ENCODE measurements at regions of chr6 and their contacts with region 1.

Region 1: GRCh38 chr6:34392497-34393190 is at the start of gene NUDT3:
- DNase-seq: peak; percentile 96
- ATAC-seq: peak; percentile 92
- H3K4me3 Mint-ChIP-seq: no peak within 1 kb of the TSS
- H3K27ac Mint-ChIP-seq: peak within 1 kb of the TSS; percentile 95
- H3K4me1 Mint-ChIP-seq: peaks cover 21% of the 10 kb centered on the region
- H3K27me3 Mint-ChIP-seq: no peaks in the 10 kb centered on the region
- total RNA-seq, gene NUDT3: 13.3 to 13.6 TPM

Region 2: DNA sequence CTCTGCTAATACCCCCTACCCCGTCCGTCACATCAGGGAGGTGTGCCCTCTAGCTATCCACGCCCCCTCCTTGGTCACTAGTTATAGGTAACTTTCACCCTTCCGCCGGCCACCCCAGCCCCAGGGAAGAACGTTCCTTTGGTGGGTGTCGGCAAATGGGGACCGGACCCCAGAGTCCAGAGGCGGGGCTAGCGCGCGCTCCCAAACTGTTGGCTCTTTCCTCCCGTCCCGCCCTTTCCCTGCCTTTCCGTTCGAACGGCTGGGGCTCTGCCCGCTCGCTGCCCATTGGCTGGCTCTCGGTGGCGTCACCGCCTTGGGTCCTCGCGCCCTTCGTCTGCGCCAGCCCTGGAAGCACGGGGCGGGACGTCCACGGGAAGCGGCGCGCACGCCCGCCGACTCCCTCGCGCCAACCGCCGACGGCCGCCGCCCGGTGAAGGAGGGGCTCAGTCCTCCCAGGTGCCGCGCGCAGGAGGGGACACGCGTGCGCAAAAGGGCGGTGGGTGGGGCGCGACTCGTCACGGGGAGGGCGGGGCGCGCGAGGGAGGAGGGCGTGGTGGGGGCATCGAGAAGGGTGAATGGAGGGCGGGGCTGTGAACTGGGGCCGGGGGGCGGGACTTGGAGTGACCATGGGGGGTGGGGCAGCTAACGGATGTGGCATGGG is 982.5 kb before region 1 on chr6:
- CTCF ChIA-PET with region 1: no interaction called
- POLR2A ChIA-PET with region 1: no interaction called
- intact Hi-C with region 1: loop called in 1 of 2 experiments (anchors 2 kb)
- DNase-seq: peak; percentile 98
- ATAC-seq: peak; percentile 88
- H3K4me3 Mint-ChIP-seq: peak overlapping the region; percentile 80
- H3K27ac Mint-ChIP-seq: peak overlapping the region; percentile 96
- H3K4me1 Mint-ChIP-seq: peaks cover 31% of the 10 kb centered on the region
- H3K27me3 Mint-ChIP-seq: no peaks in the 10 kb centered on the region

Region 3: GRCh38 chr6:34182751-34183531 is 209.7 kb before region 1 on chr6:
- CTCF ChIA-PET with region 1: no interaction called
- POLR2A ChIA-PET with region 1: interaction called, 3 read pairs
- intact Hi-C with region 1: loop called in 1 of 2 experiments (anchors 1 kb)
- DNase-seq: peak; percentile 78
- ATAC-seq: peak; percentile 95
- H3K4me3 Mint-ChIP-seq: peak overlapping the region; percentile 65
- H3K27ac Mint-ChIP-seq: peak overlapping the region; percentile 95
- H3K4me1 Mint-ChIP-seq: peaks cover 20% of the 10 kb centered on the region
- H3K27me3 Mint-ChIP-seq: no peaks in the 10 kb centered on the region

Region 4: DNA sequence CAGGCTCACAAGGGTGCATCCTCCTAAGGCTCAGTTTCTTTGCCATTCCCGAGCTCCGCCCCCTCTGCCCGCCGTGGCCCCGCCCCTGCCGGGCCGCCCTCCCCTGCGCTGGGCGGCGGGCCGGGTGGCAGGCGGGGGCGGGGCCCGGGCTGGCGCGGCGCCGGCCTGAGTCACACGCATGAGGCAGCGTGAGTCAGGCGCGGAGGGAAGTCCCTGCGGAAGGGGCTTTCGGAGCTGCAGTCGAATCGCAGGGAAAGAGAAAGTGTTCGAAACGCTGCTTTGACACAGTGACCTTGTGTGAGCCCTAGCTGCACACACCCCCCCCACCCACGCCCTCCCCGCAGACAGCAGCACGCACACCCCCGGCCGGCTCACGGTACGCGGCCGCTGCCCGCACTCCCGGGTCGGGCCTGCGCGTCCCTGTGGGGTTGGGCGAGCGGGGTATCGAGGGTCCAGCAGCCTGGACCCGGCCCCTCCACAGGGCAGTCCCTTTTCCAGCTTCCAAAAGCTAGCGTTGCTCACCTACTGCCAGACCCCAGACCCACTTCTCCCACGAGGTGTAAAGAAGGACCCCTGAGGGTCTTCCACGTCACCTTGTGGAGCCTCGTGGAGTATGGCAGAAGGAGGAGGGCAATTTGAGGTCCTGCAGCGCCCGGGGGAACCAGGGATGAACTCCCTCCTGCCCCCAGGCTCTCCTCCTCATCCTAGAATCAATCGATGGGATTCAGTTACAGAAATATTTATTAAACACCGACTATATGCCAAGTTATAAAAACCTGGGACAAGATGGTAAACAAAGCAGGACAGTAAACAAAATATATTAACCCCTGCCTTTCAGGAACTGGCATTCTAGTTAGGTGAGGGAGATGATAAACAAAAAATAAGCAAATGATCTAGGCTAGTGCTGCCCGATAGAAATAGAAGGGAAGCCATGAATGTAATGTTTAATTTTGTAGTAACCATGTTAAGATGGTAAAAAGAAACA is 168.4 kb before region 1 on chr6:
- CTCF ChIA-PET with region 1: no interaction called
- POLR2A ChIA-PET with region 1: no interaction called
- intact Hi-C with region 1: loop called in 1 of 2 experiments (anchors 1 kb)
- DNase-seq: peak; percentile 98
- ATAC-seq: peak; percentile 97
- H3K4me3 Mint-ChIP-seq: peak overlapping the region; percentile 52
- H3K27ac Mint-ChIP-seq: peak overlapping the region; percentile 88
- H3K4me1 Mint-ChIP-seq: peaks cover 44% of the 10 kb centered on the region
- H3K27me3 Mint-ChIP-seq: no peaks in the 10 kb centered on the region

Region 5: GRCh38 chr6:34414999-34415858 is 22.6 kb after region 1 on chr6:
- CTCF ChIA-PET with region 1: interaction called, 16 read pairs
- POLR2A ChIA-PET with region 1: interaction called, 5 read pairs
- intact Hi-C with region 1: no loop called
- DNase-seq: peak; percentile 48
- ATAC-seq: peak; percentile 57
- H3K4me3 Mint-ChIP-seq: no peak overlapping the region
- H3K27ac Mint-ChIP-seq: peak overlapping the region; percentile 51
- H3K4me1 Mint-ChIP-seq: peaks cover 15% of the 10 kb centered on the region
- H3K27me3 Mint-ChIP-seq: no peaks in the 10 kb centered on the region

Region 6: GRCh38 chr6:34791701-34792235 is 399.1 kb after region 1 on chr6 and contains the start of gene BLTP3A:
- CTCF ChIA-PET with region 1: interaction called, 3 read pairs
- POLR2A ChIA-PET with region 1: no interaction called
- intact Hi-C with region 1: loop called in 1 of 2 experiments (anchors 2 kb)
- DNase-seq: peak; percentile 88
- ATAC-seq: peak; percentile 95
- H3K4me3 Mint-ChIP-seq: peak within 1 kb of the TSS; percentile 99
- H3K27ac Mint-ChIP-seq: peak within 1 kb of the TSS; percentile 95
- H3K4me1 Mint-ChIP-seq: peaks cover 21% of the 10 kb centered on the region
- H3K27me3 Mint-ChIP-seq: no peaks in the 10 kb centered on the region
- total RNA-seq, gene BLTP3A: 17.0 to 21.0 TPM

Region 7: DNA sequence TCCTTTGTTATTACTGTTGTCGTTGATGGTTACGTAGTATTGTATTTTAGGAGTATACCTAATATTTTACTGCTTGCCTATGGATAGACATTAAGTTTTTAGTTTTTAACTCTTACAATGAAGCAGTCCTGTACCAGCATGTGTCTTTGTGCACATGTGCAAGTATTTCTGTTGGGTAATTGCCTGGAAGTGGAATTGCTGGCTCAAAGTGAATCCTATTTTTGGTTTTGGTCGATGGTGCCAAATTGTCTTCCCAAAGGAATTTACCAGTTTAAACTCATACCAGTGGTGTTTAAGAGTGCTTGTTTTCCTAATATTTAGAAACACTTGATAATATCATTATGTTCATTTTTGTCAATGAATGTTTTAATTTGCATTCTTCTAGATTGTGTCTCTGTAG is 571.9 kb after region 1 on chr6:
- CTCF ChIA-PET with region 1: no interaction called
- POLR2A ChIA-PET with region 1: no interaction called
- intact Hi-C with region 1: no loop called
- DNase-seq: no peak
- ATAC-seq: no peak
- H3K4me3 Mint-ChIP-seq: no peak overlapping the region
- H3K27ac Mint-ChIP-seq: no peak overlapping the region
- H3K4me1 Mint-ChIP-seq: peaks cover 10% of the 10 kb centered on the region
- H3K27me3 Mint-ChIP-seq: no peaks in the 10 kb centered on the region